Posterior vena cava (tissue), 2 donors: ENCODE measurements at regions of chr15 and their contacts with region 1.

Region 1: DNA sequence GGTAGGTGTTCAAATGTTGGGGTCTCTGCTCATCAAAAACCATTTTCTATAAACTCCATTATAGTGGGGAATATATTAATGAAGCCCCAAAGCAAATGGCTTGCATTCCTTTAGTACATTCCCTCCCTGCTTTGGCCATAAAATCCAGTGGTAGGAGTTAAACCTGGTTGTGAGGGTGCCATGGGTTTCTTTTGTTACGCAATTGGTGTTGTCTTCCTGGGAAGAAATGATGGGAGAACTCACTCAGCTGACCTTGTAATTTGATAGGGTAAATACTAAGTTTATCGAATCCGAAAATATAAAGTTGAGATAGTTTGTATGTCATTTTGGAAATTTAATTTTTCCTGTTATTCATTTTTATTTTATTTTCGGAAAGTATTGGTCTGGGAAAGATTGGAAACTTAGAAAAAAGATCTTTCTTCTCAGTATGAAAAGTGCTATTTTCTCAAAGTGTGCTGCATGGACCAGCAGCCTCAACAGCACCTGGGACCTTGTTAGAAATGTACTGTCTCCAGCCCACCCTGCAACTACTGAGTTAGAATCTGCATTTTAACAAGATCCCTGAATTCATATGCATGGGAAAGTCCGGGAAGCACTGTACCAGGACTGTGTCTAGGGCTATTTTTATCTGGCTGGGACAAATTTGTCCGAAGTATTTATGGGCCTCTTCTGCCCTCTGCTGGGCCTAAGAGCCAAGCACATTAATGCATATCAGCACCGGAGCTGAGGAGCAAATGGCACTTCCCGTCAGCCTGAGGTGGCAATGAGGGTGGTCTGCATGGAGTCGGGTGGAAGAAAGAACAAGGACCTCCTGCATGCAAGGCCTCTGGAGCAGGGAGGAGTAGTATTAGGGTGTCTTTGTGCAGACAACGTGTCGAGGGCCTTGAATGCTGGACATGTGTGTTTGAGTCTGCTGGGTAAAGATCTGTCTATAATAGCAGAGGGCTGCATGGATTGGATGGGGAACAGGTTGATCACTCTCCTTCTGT is 54.7 kb downstream of the FAM81A start:
- DNase-seq: no peak

Region 2: DNA sequence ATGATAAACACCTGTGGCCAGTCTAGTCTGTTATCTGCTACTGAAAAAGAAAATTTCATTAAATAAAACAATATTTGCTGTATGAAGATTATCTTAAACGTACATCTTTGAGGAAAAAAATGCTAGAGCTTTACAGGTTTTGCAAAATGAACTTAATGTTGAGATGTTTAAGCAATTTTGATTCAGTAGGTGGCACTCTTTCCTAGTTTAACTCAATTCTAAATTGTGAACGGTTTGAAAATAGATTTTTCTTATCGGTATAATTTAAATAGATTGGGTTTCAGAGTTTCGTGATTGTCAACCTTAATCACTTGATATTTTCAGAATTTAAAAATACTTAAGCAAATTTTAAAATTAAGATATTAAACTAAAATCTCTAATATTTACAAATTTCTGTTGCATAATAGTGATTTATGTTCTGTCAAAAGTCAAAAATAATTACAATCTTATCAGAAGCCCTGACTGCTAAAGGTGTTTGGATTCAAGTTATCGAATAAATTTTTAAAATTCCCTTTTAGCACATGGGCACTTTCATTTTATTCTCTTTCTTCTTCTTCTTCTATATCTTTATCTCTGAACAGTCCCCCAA is 512.2 kb before region 1 on chr15:
- intact Hi-C with region 1: loop called (anchors 5 to 10 kb)
- DNase-seq: no peak

Region 3: GRCh38 chr15:59158701-59159034 is 334.0 kb before region 1 on chr15:
- intact Hi-C with region 1: loop called in 1 of 2 experiments (anchors 10 kb)
- DNase-seq: no peak

Region 4: GRCh38 chr15:59174835-59175831 is 317.6 kb before region 1 on chr15:
- intact Hi-C with region 1: loop called in 1 of 2 experiments (anchors 5 kb)
- DNase-seq: no peak

Region 5: GRCh38 chr15:59725172-59725486 is 232.4 kb after region 1 on chr15:
- intact Hi-C with region 1: no loop called
- DNase-seq: no peak